GM10248 (cell line): ENCODE measurements at regions of chr6 and their contacts with region 1.

Region 1: DNA sequence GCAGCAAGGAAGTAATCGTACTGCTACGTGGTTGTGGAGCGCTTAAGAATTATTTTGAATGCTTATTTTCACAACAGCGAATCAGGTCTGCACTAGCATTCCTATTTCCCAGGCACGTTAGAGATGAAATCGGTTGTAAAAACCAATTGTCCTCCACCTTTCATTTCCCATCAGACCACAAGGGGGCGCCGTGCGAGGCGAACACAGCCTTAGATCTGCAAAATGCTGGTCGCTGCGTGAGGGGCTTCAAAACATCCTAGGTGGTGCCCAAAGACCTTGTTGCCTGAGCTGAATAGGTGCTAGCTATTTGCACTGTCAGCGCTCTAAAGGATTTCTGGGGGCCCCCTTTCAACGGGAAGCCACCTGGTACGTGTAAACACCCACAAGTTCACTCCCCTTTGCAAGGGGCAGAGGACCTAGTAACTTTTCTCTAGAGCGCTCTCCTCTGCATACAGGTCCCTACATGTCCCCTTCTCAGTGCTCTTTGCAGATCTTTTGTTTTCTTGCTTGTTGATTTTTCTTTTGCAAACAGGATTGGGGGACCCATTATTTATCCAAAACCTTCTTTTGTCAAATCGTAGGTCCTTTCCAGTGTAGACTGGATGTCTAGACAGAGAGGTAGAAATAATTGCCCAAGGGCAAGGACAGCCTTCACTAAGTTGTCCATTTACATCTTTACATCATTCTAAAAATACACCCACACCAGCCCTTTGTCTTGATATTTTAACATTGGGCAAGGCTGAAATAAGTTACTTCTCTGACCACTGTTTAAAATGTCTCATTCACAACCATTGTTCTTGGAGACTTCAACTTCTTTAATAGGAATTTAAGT is 59.8 kb downstream of the NEDD9 start:
- DNase-seq: peak; percentile 68
- CTCF ChIP-seq: peak; percentile 69

Region 2: DNA sequence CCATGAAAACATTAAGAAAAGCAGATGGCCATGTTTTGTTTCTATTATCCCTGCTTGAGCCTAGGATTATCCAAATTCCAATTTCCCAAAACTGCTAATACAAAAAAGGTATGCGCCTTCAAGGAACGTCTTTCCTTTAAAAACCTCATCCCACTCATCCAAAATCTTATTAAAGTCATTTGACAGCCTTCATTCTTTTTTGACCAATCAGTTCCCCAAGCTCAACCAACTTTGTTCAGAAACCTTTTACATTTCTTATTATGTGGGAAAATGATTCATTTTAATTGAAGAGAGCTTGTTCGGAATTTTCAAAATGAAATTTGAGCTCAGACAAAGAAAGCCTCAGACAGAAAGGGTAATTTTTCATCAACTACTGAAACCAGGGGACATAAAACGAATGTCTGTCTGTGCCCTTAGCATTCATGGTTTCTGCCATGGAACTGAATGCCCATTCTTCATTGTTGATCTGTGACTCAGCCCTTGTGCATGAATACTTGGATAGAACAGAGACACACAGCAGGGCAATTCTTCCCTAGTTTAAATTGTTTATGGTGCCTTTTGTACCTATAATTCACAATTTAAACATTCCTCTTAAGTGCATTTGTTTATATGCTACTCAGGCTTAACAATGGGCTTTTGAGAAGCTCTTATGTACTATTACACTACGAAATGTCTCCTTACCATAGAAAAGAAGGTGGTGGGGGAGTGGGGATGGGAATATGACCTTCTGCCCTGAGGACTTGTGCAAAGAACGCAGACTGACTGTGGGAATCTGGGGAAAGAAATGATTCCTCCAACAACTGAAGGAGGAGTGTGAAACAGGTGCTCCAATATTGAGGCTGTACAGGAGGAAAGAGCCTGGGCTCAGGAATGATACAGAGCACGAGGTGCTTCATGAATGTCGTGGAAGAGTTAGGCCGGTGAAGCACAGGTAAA is 11.4 kb before region 1 on chr6:
- CTCF ChIA-PET with region 1: interaction called, 21 read pairs
- POLR2A ChIA-PET with region 1: no interaction called
- DNase-seq: no peak
- CTCF ChIP-seq: no peak

Region 3: GRCh38 chr6:11185204-11185954 is 12.7 kb after region 1 on chr6:
- CTCF ChIA-PET with region 1: interaction called, 14 read pairs
- POLR2A ChIA-PET with region 1: no interaction called
- DNase-seq: no peak
- CTCF ChIP-seq: no peak

Region 4: DNA sequence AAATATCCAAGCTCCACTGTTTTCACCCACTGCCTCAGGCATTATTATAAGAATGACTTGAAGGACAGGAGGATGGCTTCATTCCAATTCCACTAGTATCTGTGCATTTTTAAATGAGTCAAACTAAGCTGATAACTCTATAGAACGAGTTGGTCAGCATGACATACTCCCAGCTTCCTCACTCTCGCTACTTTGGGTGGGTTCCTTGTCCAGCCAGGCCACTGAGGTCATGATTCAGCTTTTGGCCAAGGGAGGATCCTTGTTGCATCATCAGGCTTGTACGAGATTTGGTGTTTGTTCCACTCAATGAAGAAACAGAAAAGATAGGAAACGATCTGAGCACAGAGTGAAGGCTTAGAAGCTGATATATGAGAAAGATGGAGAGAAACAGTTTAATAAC is 39.9 kb after region 1 on chr6:
- CTCF ChIA-PET with region 1: interaction called, 10 read pairs
- POLR2A ChIA-PET with region 1: no interaction called
- DNase-seq: no peak
- CTCF ChIP-seq: no peak

Region 5: DNA sequence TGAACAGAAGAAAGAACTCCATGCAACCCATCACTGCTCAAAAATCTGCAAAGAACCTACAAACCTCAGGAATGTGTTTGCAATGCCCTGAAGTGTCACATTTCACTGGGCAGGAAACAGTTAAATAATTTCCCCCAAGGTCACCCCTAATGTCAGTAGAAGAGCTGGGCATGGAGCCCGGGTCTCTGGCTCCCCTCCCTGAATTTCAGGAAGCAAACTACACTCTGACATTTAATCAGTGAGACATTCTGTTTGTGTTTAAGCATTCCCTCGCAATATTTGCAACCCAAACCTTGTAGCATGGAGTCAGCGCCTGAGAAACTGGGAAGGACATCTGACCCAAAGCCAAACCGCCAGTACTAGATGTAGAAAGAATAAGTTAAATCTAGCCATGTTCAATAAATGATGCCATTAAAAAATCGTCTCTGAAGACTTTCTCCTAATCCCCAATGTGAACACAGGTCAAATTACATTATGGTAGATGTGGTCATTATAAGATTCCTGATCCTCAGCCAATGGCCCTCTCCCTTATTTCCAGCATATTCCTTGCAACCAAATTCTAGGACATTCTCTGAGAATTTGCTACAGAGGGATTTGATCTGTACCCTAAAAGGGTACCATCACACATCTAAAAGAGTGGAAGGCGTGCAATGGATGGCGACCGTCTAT is 697.1 kb after region 1 on chr6:
- CTCF ChIA-PET with region 1: no interaction called
- POLR2A ChIA-PET with region 1: no interaction called
- DNase-seq: no peak
- CTCF ChIP-seq: no peak